Aorta (tissue), 5 donors: ENCODE measurements at regions of chr7 and their contacts with region 1.

Region 1: DNA sequence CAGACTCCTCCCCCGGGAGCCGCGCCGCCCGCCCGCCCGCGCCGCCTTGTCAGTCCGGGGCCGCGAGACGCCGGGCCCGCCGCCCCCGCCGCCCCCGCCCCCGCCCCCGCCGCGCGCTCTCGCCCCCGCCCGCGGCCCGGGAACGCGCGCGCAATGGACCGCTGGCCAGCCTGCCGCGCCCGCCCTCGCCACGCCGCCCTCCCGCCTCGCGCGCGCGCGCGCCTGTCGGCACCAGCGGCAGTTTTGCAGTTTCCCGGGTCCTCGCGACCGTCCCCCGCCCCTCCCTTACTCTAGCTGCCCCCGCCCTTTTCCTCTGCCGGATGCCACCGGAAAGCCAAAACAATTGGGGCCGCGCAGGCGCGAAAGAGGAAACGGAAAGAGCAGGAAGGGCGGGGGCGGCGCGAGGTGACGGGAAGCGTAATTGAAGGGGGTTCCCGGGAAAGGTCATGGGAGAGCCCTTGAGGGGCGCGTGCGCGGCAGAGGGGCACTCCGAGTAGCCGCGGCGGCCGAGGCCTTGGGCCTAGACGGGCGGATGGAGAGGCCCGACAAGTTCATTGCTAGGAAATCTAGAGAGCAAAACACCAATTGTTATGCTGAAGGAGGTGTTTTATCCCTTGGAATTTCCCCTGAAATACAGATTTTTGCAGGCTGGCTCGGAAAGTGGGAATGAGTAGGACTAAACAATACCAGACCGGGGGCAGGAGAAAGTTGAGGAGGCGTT is 400 bp upstream of the KBTBD2 start:
- DNase-seq: peak; percentile 99
- ATAC-seq: peak; percentile 95
- H3K4me3 ChIP-seq: peak overlapping the region; percentile 81 to 99
- H3K27ac ChIP-seq: peak overlapping the region; percentile 91 to 95
- H3K4me1 ChIP-seq: no peaks in the 10 kb centered on the region
- H3K27me3 ChIP-seq: no peaks in the 10 kb centered on the region

Region 2: GRCh38 chr7:32204361-32205018 is 687.5 kb before region 1 on chr7:
- intact Hi-C with region 1: no loop called
- DNase-seq: peak; percentile 71 to 81
- ATAC-seq: peak; percentile 85
- H3K4me3 ChIP-seq: peak overlapping the region in 1 of 2 donors; percentile 57
- H3K27ac ChIP-seq: no peak overlapping the region
- H3K4me1 ChIP-seq: no peaks in the 10 kb centered on the region
- H3K27me3 ChIP-seq: no peaks in the 10 kb centered on the region

Region 3: GRCh38 chr7:32479574-32480200 is 412.3 kb before region 1 on chr7:
- intact Hi-C with region 1: no loop called
- DNase-seq: no peak
- ATAC-seq: no peak
- H3K4me3 ChIP-seq: no peak overlapping the region
- H3K27ac ChIP-seq: no peak overlapping the region
- H3K4me1 ChIP-seq: no peaks in the 10 kb centered on the region
- H3K27me3 ChIP-seq: no peaks in the 10 kb centered on the region

Region 4: GRCh38 chr7:32937344-32938174 is 45.6 kb after region 1 on chr7:
- intact Hi-C with region 1: loop called (anchors 2 to 5 kb)
- DNase-seq: peak in 1 of 2 donors; percentile 54
- ATAC-seq: no peak
- H3K4me3 ChIP-seq: no peak overlapping the region
- H3K27ac ChIP-seq: no peak overlapping the region
- H3K4me1 ChIP-seq: peaks cover 7 to 8% of the 10 kb centered on the region in 2 donors
- H3K27me3 ChIP-seq: no peaks in the 10 kb centered on the region

Region 5: GRCh38 chr7:32942786-32943653 is 51.1 kb after region 1 on chr7:
- intact Hi-C with region 1: loop called (anchors 2 to 5 kb)
- DNase-seq: peak; percentile 86 to 93
- ATAC-seq: peak; percentile 97
- H3K4me3 ChIP-seq: peak overlapping the region; percentile 61 to 92
- H3K27ac ChIP-seq: peak overlapping the region; percentile 0 to 85
- H3K4me1 ChIP-seq: no peaks in the 10 kb centered on the region
- H3K27me3 ChIP-seq: no peaks in the 10 kb centered on the region

Region 6: DNA sequence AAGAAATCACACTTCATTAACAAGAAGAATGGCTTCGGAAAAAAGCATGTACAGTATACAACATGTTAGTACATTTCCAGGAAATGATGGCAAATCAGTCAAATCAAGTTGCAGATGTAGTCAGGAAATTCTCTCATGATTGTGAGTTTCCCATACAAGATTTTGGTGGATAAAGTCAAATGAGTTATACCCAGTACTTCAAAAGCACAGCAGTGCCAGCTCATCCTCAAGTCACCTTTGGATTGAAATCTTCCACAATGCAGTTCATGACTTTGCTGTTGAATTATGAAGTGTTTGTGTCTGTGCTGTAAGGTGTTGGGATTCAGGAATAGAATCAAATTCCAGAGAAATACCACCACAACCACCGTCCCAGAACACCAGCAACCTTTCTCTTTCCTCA is 712.1 kb after region 1 on chr7:
- intact Hi-C with region 1: no loop called
- DNase-seq: no peak
- ATAC-seq: no peak
- H3K4me3 ChIP-seq: no peak overlapping the region
- H3K27ac ChIP-seq: no peak overlapping the region
- H3K4me1 ChIP-seq: no peaks in the 10 kb centered on the region
- H3K27me3 ChIP-seq: no peaks in the 10 kb centered on the region